ENCODE measurements at regions of chr5 and their contacts with region 1.

Region 1: DNA sequence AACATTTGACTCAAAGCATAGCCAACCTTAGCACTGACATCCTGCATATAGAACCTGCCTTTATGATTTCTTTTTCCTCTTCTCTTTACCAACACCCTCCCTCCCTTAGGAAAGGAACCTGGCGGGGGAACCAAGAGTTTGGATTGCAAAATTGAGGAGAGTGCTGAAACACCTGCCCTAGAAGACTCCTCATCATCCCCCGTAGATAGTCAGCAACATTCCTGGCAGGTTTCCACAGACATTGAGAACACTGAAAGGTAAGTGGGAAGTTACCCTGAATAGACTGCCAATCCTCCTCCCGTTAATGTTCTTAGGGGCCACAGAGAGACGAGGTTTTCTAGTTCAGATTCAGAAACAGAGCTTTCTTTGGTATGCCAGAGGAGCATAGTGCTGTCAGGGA is 88.8 kb downstream of the RGS7BP start:
- DNase-seq: no peak
- H3K4me3 Mint-ChIP-seq: no peak overlapping the region
- H3K27ac Mint-ChIP-seq: no peak overlapping the region
- H3K4me1 Mint-ChIP-seq: no peaks in the 10 kb centered on the region
- H3K27me3 Mint-ChIP-seq: no peaks in the 10 kb centered on the region
- CTCF ChIP-seq: no peak

Region 2: DNA sequence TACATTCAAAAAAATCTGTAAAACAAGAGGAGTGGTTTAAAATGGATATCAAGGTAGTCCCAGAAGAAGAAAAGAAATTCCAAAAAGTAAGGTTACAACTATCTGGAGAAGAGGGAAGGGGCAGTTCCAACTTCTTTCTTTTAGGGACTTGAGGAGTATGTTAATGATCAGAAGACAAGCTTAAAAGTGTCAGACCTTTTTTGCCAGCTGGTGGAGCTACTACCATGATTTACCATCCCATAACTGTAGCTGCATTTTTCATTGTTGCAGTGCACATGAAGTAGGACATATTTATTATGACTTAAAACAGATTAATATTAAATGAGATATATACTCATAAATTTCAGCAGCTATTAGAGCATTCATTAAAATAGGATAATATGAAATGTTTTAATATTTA is 247.3 kb before region 1 on chr5:
- CTCF ChIA-PET with region 1: no interaction called
- intact Hi-C with region 1: loop called (anchors 5 kb)
- DNase-seq: no peak
- H3K4me3 Mint-ChIP-seq: no peak overlapping the region
- H3K27ac Mint-ChIP-seq: no peak overlapping the region
- H3K4me1 Mint-ChIP-seq: no peaks in the 10 kb centered on the region
- H3K27me3 Mint-ChIP-seq: no peaks in the 10 kb centered on the region
- CTCF ChIP-seq: no peak

Measured in Calu3 (cell line).